AG04450 (cell line): ENCODE measurements at regions of chr2 and their contacts with region 1.

Region 1: DNA sequence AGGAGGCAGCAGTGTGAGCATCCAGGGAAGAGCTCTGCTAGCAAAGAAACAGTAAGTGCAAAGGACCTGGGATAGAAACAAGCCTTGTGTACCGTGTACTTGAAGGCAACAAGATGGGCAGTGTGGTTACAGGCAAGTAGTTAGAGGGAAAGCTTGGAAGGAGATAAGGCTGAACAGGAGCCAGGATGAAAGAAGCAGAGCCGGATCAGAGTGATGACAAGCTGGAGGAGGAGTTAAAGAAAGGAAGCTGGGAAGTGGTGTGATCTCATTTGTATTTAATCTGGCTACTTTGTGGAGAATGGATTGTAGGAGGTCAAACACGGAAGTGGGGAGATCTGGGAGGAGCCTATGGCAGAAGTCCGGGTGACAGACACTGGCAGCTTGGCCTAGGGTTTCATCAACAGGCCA is 44.7 kb upstream of the VPS54 start:
- DNase-seq: peak; percentile 32
- H3K4me3 ChIP-seq: no peak overlapping the region
- H3K27ac ChIP-seq: peak overlapping the region; percentile 82
- H3K27me3 ChIP-seq: no peaks in the 10 kb centered on the region
- CTCF ChIP-seq: no peak

Region 2: GRCh38 chr2:63827749-63828148 is 236.2 kb before region 1 on chr2:
- CTCF ChIA-PET with region 1: no interaction called
- POLR2A ChIA-PET with region 1: no interaction called
- DNase-seq: peak; percentile 68
- H3K4me3 ChIP-seq: no peak overlapping the region
- H3K27ac ChIP-seq: no peak overlapping the region
- H3K27me3 ChIP-seq: no peaks in the 10 kb centered on the region
- CTCF ChIP-seq: no peak

Region 3: DNA sequence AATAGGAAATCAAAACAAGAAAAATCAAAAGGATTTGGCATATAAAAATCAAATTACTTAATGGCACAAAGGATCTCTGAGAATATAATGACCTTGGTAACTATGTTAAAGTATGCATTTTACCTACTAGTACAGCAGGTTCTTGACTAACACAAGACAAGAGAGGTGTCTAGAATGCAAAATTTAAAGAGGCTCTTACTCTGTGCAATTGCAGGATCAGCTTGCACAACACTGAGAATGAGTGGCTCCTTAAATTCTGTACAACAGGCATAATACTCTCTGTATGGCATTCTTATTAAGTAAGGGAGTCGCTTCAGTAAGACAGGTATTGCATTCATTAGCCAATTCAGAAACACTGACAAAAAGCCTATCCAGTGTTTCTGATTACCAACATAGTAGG is 149.6 kb before region 1 on chr2:
- CTCF ChIA-PET with region 1: no interaction called
- POLR2A ChIA-PET with region 1: no interaction called
- DNase-seq: no peak
- H3K4me3 ChIP-seq: no peak overlapping the region
- H3K27ac ChIP-seq: no peak overlapping the region
- H3K27me3 ChIP-seq: no peaks in the 10 kb centered on the region
- CTCF ChIP-seq: no peak

Region 4: DNA sequence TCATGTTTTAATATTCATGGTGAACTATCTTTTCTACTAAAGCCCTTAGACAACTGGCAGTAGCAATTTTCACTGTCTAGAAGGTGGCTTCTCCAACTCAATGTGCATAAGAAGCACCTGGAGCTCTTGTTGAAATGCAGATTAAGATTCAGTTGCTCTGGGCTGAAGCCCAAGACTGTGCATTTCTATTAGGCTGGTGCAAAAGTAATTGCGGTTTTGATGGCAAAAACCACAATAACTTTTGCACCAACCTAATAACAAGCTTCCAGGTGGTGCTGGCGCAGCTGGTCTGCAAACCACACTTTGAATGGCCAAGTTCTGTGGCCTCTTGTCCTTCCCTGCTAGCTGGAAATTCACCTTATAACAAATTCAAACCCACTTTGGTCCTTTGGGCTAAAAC is 18.0 kb before region 1 on chr2:
- CTCF ChIA-PET with region 1: interaction called, 7 read pairs
- POLR2A ChIA-PET with region 1: interaction called, 10 read pairs
- DNase-seq: no peak
- H3K4me3 ChIP-seq: no peak overlapping the region
- H3K27ac ChIP-seq: peak overlapping the region; percentile 11
- H3K27me3 ChIP-seq: no peaks in the 10 kb centered on the region
- CTCF ChIP-seq: no peak